Upper lobe of right lung (tissue), 1 donor: ENCODE measurements at regions of chr1 and their contacts with region 1.

Region 1: DNA sequence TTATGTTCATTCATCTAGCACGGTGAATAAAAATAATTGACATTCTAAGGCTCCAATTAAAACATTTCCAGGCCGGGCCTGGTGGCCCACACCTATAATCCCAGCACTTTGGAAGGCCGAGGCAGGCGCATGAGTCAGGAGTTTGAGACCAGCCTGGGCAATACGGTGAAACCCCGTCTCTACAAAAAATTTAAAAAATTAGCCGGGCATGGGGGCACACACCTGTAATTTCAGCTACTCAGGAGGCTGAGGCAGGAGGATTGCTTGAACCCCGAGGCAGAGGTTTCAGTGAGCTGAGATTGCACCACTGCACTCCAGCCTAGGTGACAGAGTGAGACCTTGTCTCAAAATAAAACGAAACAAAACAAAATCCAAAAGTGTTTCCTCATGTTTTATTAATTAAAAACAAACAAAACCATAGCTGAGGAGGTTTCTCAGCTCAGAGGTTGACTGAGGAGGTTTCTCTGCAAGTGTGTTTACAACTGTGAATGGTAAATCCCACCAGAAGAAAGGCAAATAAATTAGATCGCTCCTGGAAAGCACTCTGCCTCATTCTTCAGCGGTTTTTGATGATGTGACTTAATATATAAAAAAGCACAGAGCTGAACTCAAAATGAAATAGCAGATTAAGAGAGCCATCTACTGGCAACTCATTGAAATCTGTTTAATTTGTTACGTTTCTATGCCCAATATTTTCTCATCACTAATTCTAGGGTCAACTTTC is 37.7 kb upstream of the ATG4C start:
- DNase-seq: no peak
- ATAC-seq: peak; percentile 48
- H3K4me3 ChIP-seq: no peak overlapping the region
- H3K27ac ChIP-seq: no peak overlapping the region
- H3K4me1 ChIP-seq: no peaks in the 10 kb centered on the region
- H3K27me3 ChIP-seq: no peaks in the 10 kb centered on the region
- CTCF ChIP-seq: peak; percentile 64

Region 2: GRCh38 chr1:62508187-62508758 is 238.0 kb before region 1 on chr1:
- intact Hi-C with region 1: loop called (anchors 10 kb)
- DNase-seq: no peak
- ATAC-seq: no peak
- H3K4me3 ChIP-seq: no peak overlapping the region
- H3K27ac ChIP-seq: no peak overlapping the region
- H3K4me1 ChIP-seq: no peaks in the 10 kb centered on the region
- H3K27me3 ChIP-seq: no peaks in the 10 kb centered on the region
- CTCF ChIP-seq: peak; percentile 62

Region 3: GRCh38 chr1:62841587-62842169 is 95.4 kb after region 1 on chr1:
- intact Hi-C with region 1: no loop called
- DNase-seq: no peak
- ATAC-seq: peak; percentile 77
- H3K4me3 ChIP-seq: no peak overlapping the region
- H3K27ac ChIP-seq: no peak overlapping the region
- H3K4me1 ChIP-seq: no peaks in the 10 kb centered on the region
- H3K27me3 ChIP-seq: no peaks in the 10 kb centered on the region
- CTCF ChIP-seq: peak; percentile 78

Region 4: DNA sequence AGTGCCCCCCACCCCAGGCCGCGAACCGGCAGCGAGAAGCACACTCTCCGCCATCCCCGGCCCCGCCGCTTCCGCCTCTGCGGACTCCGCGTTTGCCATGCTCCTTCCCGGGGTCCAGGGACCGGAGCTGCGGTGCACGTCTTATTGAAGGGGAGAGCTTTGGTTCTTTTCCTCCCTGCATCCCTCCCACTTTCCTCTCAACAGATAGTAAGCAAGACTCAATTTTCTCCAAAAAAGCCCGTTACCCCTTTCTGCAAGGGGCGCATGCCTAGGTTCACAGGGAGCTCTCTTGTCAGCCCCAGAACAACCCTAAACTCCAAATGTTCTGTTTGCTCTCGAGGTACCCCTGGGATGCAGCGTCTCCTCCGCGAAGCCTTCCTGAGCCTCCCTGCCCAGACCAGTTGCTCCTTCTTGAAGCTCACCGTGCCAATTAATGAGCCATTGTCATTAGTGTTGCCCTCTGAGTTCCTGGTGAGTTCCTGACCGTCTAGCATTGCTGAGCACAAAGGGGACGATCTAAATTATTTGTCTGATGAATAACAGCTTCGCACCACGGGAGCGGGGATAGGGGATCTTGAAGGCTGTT is 584.2 kb after region 1 on chr1:
- intact Hi-C with region 1: no loop called
- DNase-seq: no peak
- ATAC-seq: no peak
- H3K4me3 ChIP-seq: no peak overlapping the region
- H3K27ac ChIP-seq: no peak overlapping the region
- H3K4me1 ChIP-seq: peaks cover 4% of the 10 kb centered on the region
- H3K27me3 ChIP-seq: peaks cover 89% of the 10 kb centered on the region
- CTCF ChIP-seq: no peak